Prostate gland (tissue), 2 donors: ENCODE measurements at regions of chr22 and their contacts with region 1.

Region 1: DNA sequence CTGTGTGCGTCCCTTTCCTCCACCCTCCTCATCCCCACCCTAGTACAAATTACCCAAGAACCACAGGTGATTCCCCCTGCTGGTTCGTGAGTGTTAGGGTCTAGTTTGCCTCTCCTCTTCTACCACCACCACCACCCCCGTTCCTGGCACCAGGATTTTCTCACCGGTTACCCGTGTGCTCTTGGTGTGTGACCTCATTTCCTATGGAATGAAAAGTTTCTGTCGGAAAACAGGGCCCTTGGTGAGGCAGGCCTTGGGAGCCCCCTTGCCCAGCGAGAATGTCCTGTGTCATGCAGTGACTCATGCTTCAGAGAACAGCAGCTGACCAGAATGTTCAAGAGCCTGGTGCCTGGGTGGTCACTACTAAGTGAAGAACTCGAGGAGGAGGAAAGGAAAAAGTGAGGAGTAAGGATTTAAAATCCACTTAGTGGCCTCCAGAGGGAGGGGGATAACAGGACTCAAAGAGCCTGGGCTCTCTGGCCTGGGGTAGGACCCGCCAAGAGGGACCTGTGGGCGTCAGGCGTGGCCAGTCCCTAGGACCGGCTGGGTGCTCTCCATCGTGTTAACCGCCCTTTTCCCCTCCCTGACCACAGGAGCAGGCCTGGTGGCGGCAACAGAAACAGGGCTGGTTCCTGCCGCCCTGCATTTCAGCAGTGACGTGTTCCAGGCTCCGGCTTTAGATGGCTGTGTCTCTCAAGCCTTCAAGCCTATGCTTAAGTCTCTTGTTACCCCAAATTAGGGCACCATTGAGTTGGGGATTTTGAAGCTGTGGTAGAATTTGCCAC is 30.2 kb downstream of the C22orf31 start:
- DNase-seq: peak; percentile 39
- H3K4me3 ChIP-seq: peak overlapping the region; percentile 34 to 35
- H3K27ac ChIP-seq: peak overlapping the region; percentile 74 to 83
- H3K4me1 ChIP-seq: peaks cover 5% of the 10 kb centered on the region
- H3K27me3 ChIP-seq: no peaks in the 10 kb centered on the region
- CTCF ChIP-seq: no peak
- POLR2A ChIP-seq: no peak

Region 2: GRCh38 chr22:28600546-28601143 is 430.8 kb before region 1 on chr22:
- intact Hi-C with region 1: loop called (anchors 10 kb)
- DNase-seq: no peak
- H3K4me3 ChIP-seq: no peak overlapping the region
- H3K27ac ChIP-seq: no peak overlapping the region
- H3K4me1 ChIP-seq: no peaks in the 10 kb centered on the region
- H3K27me3 ChIP-seq: no peaks in the 10 kb centered on the region
- CTCF ChIP-seq: peak; percentile 23 to 75 (median 62)
- POLR2A ChIP-seq: no peak

Region 3: DNA sequence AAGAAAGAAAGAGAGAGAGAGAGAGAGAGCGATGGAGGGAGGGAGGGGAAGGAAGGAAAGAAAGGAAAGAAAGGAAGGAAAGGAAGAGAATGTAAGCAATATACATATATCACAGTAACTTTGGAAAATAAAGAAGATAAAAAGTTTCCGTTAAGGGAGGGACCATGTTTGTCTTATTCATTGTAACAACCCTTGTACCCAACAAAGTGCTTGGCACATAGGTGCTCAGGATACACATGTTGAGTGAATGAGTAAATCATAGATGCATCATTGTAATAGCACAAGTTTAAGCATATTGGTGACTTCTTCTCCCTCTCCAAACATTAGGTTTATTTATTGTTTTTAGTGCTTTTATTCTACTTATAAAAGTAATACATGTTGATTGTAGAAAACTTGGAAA is 187.8 kb before region 1 on chr22:
- intact Hi-C with region 1: no loop called
- DNase-seq: no peak
- H3K4me3 ChIP-seq: no peak overlapping the region
- H3K27ac ChIP-seq: no peak overlapping the region
- H3K4me1 ChIP-seq: no peaks in the 10 kb centered on the region
- H3K27me3 ChIP-seq: no peaks in the 10 kb centered on the region
- CTCF ChIP-seq: no peak
- POLR2A ChIP-seq: no peak

Region 4: DNA sequence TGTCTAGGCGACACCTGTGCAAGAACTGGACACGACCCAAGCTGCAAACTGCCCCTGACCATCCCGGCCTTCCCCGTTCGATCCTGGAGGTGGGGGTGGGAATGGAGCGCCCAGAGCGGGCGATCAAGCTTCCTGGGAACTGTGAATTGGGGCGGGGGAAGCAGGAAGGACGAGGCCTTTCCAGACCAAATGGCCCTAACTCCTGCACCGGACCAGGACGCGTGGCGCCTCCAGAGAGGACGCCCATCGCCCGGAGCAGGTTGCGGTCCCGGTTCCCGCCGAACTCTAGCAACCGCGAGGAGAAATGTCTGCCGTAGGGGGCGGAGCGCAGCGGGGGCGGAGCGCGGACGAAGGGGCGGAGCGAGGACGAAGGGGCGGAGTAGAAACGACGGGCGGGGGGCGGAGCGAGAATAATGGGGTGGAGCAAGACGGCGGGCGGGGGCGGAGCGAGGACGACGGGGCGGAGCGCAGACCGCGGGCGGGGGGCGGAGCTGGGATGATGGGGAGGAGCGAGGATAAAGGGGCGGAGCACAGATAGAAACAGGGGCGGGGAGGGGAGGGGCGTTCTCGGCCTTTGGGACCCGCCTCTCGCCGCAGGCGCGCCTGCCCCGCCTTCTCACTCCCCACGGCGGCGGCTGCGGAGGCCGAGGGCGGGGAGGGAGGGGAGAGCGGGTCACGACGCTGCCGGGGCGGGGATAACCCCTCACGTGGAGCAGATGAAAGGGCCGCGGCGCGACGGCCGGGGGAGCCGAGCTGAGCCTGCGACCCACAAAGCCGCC is 148.4 kb before region 1 on chr22 and contains the start of gene ZNRF3:
- intact Hi-C with region 1: loop called (anchors 10 kb)
- DNase-seq: peak; percentile 96
- H3K4me3 ChIP-seq: peak within 1 kb of the TSS; percentile 63 to 70
- H3K27ac ChIP-seq: peak within 1 kb of the TSS; percentile 62 to 75
- H3K4me1 ChIP-seq: peaks cover 3% of the 10 kb centered on the region
- H3K27me3 ChIP-seq: no peaks in the 10 kb centered on the region
- CTCF ChIP-seq: peak in 1 of 4 experiments; percentile 16
- POLR2A ChIP-seq: peak; percentile 52
- total RNA-seq, gene ZNRF3: 38.5 to 46.1 TPM

Region 5: GRCh38 chr22:28951969-28952521 is 79.4 kb before region 1 on chr22:
- intact Hi-C with region 1: loop called (anchors 1 kb)
- DNase-seq: peak; percentile 81
- H3K4me3 ChIP-seq: no peak overlapping the region
- H3K27ac ChIP-seq: peak overlapping the region; percentile 10 to 34
- H3K4me1 ChIP-seq: peaks cover 4% of the 10 kb centered on the region
- H3K27me3 ChIP-seq: no peaks in the 10 kb centered on the region
- CTCF ChIP-seq: peak in 3 of 4 experiments; percentile 40 to 65 (median 46)
- POLR2A ChIP-seq: no peak

Region 6: DNA sequence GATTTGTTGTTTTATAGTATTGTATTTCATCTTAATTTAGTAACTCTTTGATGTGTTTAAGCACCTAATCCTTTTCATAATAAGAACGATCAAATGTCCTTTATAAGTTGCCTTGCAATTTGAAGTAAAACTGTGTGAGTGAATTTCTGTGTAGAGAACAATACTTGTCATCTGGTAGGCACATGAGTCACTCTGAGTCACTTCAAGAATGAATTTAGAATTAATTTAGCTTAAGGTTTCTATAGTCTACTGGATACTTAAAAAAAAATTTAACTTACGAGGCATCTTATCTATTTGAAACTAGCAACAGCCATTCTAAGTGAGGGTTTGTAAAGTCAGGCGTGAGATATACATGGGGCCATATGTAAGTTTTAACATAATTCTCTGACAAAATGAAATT is 54.8 kb before region 1 on chr22:
- intact Hi-C with region 1: no loop called
- DNase-seq: no peak
- H3K4me3 ChIP-seq: no peak overlapping the region
- H3K27ac ChIP-seq: no peak overlapping the region
- H3K4me1 ChIP-seq: no peaks in the 10 kb centered on the region
- H3K27me3 ChIP-seq: no peaks in the 10 kb centered on the region
- CTCF ChIP-seq: no peak
- POLR2A ChIP-seq: no peak

Region 7: DNA sequence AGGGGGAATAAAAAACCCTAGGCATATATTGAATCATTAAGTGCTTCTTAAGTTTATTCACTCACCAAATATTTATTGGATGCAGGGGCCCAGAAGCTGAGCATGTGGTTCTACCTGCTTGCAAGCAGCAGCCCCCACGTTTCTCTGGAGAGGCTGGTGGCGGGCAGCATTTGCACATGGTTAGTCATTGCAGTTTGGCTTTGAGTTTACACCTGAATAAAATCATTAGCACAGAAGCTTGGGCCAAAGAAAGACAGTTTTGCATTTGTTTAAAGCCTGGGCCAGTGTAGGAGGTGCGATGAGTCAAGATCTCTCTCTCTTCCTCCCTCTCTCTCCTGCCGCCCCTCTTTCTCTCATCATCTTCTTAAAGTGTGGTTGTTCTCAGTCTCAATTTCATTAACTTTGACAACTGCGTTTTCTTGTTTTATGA is 42.4 kb before region 1 on chr22:
- intact Hi-C with region 1: loop called (anchors 5 kb)
- DNase-seq: no peak
- H3K4me3 ChIP-seq: no peak overlapping the region
- H3K27ac ChIP-seq: peak overlapping the region; percentile 18 to 39
- H3K4me1 ChIP-seq: peaks cover 13% of the 10 kb centered on the region
- H3K27me3 ChIP-seq: no peaks in the 10 kb centered on the region
- CTCF ChIP-seq: no peak
- POLR2A ChIP-seq: no peak